HepG2 (cell line): ENCODE measurements at regions of chrX and their contacts with region 1.

Region 1: DNA sequence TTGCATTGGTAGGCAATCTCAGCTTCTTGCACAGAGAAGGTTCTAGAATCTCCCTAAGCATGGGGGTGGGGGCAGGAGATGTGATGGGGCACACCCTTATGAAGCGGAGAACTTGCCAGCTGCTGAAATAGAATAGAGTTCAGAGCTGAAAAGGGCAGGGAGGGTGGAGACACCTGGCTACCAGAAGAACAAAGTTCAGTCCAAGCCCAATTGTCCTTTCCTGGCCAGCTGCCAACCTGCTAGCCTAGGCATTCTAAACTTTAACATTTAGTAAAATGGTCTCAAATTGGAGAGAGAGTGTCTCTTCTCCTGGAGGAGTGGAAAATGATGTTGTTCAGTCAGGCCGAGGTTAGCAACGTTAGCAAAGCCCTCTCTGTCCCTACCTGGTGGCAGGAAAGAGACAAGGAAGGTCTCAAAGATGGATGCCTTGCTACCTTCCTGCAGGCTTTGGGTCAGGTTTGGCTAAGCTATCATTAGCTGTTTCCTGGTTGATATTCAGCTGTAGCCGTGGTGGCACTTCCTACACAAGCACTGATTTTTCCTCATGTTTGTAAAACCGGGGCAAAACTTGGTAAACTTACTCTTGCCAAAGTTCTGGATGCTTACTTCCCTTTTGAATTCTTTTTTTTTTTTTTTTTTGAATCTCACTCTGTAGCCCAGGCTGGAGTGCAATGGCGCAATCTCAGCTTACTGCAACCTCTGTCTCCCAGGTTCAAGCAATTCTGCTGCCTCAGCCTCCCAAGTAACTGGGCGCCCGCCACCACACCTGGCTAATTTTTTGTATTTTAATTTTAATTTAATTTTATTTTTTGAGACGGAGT is 34.7 kb upstream of the NYX start:
- DNase-seq: peak; percentile 39
- ATAC-seq: peak; percentile 91
- H3K4me3 ChIP-seq: peak overlapping the region in 1 of 3 experiments; percentile 16; a peak in 1 of 6 replicates
- H3K27ac ChIP-seq: peak overlapping the region; percentile 54
- H3K4me1 ChIP-seq: peaks cover 11% of the 10 kb centered on the region
- H3K27me3 ChIP-seq: no peaks in the 10 kb centered on the region
- CTCF ChIP-seq: peak; percentile 31; the same call in 1 of the 2 replicates
- EP300 ChIP-seq: no peak
- POLR2A ChIP-seq: no peak
- RAD21 ChIP-seq: no peak

Region 2: GRCh38 chrX:41209853-41210252 is 202.6 kb before region 1 on chrX:
- CTCF ChIA-PET with region 1: no interaction called
- POLR2A ChIA-PET with region 1: no interaction called
- in situ Hi-C with region 1: no loop called
- intact Hi-C with region 1: no loop called
- DNase-seq: no peak
- ATAC-seq: no peak
- H3K4me3 ChIP-seq: no peak overlapping the region
- H3K27ac ChIP-seq: no peak overlapping the region
- H3K4me1 ChIP-seq: no peaks in the 10 kb centered on the region
- H3K27me3 ChIP-seq: no peaks in the 10 kb centered on the region
- CTCF ChIP-seq: no peak
- EP300 ChIP-seq: no peak
- POLR2A ChIP-seq: no peak
- RAD21 ChIP-seq: no peak

Region 3: GRCh38 chrX:41350976-41351569 is 61.4 kb before region 1 on chrX:
- CTCF ChIA-PET with region 1: no interaction called
- POLR2A ChIA-PET with region 1: no interaction called
- in situ Hi-C with region 1: no loop called
- intact Hi-C with region 1: loop called (anchors 1 kb)
- DNase-seq: no peak
- ATAC-seq: 0 out of 3 replicates have a peak, but pooled peaks have one; percentile 5
- H3K4me3 ChIP-seq: no peak overlapping the region
- H3K27ac ChIP-seq: no peak overlapping the region
- H3K4me1 ChIP-seq: no peaks in the 10 kb centered on the region
- H3K27me3 ChIP-seq: no peaks in the 10 kb centered on the region
- CTCF ChIP-seq: no peak
- EP300 ChIP-seq: no peak
- POLR2A ChIP-seq: no peak; a peak in 1 of 4 replicates
- RAD21 ChIP-seq: no peak